Esophagus squamous epithelium (tissue), 5 donors: ENCODE measurements at regions of chrX and their contacts with region 1.

Region 1: DNA sequence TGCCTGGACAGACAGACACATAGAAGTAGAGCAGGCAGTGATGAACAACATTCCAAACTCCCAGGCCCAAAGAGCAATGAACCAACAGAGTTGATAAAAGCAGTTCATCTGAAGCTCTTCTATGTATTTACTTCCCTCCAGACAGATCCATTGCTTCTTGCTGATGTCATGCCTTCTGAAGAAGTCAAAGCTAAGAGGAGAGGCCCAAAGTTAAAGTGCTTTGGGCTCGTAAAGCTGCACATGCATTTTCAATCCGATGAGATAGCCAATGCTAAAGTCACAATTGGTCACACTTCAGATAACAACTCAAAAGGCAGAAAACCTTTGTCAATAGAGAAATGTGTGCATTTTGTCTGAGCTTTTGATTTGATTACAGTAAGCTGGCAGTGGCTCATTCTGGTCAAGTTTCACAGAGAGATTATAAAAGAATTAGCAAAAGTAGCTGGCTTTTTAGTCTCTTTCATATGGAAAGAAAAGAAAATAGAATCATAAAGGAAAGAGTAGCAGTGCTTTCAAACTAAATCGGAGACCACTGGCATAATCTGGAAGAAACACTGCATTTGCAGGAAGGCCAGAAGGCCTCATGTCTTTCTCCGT is 82.0 kb downstream of the GPC4 start:
- DNase-seq: no peak
- H3K4me3 ChIP-seq: no peak overlapping the region
- H3K27ac ChIP-seq: no peak overlapping the region
- H3K4me1 ChIP-seq: peaks cover 0 to 10% (median 0%) of the 10 kb centered on the region in 3 donors
- H3K27me3 ChIP-seq: peaks cover 0 to 4% (median 0%) of the 10 kb centered on the region in 4 donors
- CTCF ChIP-seq: no peak
- POLR2A ChIP-seq: no peak

Region 2: DNA sequence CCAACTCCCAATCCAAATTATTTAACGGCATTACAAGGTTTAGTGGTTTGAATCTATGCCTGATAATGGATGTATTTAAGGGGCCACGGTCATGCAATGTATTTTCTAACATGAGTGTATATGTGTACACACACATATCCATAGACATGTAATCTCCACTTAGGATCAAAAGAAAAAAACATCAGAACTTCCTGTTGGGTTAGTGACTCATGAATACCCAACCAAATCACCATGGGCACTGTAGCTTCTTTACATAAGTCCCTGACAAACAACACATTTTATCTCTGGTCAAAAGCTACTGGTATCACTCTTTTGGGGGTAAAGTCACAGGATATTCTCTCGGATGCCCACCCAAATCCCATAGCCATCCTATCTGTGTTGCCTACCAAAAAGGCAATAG is 78.6 kb before region 1 on chrX:
- intact Hi-C with region 1: no loop called
- DNase-seq: no peak
- H3K4me3 ChIP-seq: no peak overlapping the region
- H3K27ac ChIP-seq: no peak overlapping the region
- H3K4me1 ChIP-seq: peaks cover 0 to 8% (median 0%) of the 10 kb centered on the region in 3 donors
- H3K27me3 ChIP-seq: peaks cover 0 to 7% (median 1%) of the 10 kb centered on the region in 4 donors
- CTCF ChIP-seq: no peak
- POLR2A ChIP-seq: no peak

Region 3: GRCh38 chrX:133668225-133668931 is 335.1 kb after region 1 on chrX:
- intact Hi-C with region 1: loop called (anchors 5 kb)
- DNase-seq: no peak
- H3K4me3 ChIP-seq: no peak overlapping the region
- H3K27ac ChIP-seq: no peak overlapping the region
- H3K4me1 ChIP-seq: no peaks in the 10 kb centered on the region
- H3K27me3 ChIP-seq: peaks cover 0 to 6% (median 0%) of the 10 kb centered on the region in 4 donors
- CTCF ChIP-seq: no peak
- POLR2A ChIP-seq: no peak